ENCODE measurements at regions of chr3 and their contacts with region 1.

Region 1: GRCh38 chr3:128075516-128076482 is 23.6 kb downstream of the SEC61A1 start:
- DNase-seq: peak; percentile 86
- H3K4me3 Mint-ChIP-seq: peak overlapping the region; percentile 46
- H3K27ac Mint-ChIP-seq: no peak overlapping the region
- H3K4me1 Mint-ChIP-seq: peaks cover 20% of the 10 kb centered on the region
- H3K27me3 Mint-ChIP-seq: no peaks in the 10 kb centered on the region

Region 2: DNA sequence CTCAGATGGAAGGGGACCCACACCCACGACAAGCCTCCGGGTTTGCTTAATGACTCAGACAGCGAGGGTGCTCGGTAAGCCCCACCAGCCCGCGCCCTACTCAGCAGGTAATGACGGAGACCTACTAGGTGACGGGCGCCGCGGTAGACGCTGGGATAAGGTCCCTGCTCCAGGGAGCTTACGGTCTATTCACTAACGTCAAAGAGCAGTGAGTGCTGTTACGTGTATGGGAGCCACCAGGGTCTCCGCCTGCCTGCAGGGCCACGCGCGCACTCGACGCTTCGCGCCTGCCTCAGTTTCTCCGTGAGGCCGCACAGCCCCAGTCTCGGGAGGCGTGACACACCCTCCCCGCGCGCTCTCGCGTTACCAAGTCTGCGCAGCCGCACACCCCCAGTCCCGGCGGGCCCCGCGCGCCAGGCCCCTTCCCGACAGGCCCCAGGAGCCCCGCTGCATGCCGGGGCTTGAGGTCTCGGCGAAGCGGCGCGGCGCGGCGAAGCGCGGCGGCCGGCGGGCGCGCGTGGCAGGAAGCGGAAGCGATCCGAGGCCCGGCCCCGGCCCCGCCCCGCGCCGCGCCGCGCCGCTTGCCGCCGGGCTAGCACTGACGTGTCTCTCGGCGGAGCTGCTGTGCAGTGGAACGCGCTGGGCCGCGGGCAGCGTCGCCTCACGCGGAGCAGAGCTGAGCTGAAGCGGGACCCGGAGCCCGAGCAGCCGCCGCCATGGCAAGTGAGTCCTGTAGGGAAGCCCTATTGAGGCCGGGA is 23.8 kb before region 1 on chr3 and contains the start of gene SEC61A1:
- CTCF ChIA-PET with region 1: interaction called, 3 read pairs
- intact Hi-C with region 1: loop called (anchors 1 kb)
- DNase-seq: peak; percentile 95
- H3K4me3 Mint-ChIP-seq: peak within 1 kb of the TSS; percentile 91
- H3K27ac Mint-ChIP-seq: peak within 1 kb of the TSS; percentile 95
- H3K4me1 Mint-ChIP-seq: peaks cover 40% of the 10 kb centered on the region
- H3K27me3 Mint-ChIP-seq: peaks cover under 1% of the 10 kb centered on the region
- total RNA-seq, gene SEC61A1: 115 to 119 TPM

Region 3: DNA sequence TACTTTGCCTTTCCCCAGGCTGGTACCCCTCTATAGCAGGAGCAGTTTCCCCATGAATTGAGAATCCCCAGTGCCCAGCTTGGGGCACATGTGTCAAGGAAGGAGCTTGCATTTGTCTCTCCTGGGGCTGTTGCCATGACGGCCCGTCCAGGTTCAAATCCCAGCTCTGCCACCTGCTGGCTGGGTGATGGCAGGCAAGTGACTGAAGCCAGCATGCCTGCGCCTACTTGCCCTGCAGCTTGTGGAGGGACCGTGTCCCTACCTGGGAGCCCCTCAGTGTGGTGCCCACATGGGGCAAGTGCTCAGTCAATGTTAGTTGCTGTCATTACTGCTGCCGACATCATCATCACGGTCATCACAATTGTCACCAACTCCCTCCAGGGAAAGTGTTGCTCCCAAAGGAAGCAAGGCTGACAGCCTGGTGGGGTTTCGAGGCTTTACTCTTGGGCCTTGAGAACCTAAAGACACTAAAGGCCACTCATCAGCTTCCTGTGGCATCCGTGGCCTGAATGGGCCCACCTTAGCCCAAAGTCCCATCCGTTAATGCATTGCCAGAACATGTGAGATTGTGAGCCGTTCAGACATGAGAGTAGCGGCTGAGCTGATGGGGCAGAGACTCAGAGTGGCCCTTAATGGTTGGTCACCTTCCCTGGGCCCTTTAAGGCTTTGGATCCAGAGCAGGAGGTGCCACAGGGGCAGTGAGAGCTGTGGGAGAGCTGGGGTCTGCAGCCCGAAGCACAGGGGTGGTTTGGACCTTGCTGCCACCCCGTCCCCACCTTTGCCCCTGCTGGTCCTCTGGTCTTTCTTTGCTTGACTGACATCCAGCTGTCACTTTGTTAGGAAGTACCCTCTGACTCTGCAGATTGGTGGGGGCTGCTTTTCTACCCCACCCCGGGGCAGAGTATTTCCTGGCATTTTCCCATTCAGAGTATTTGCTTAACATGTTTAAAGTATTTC is 246.5 kb after region 1 on chr3:
- CTCF ChIA-PET with region 1: no interaction called
- intact Hi-C with region 1: loop called (anchors 1 kb)
- DNase-seq: peak; percentile 84
- H3K4me3 Mint-ChIP-seq: no peak overlapping the region
- H3K27ac Mint-ChIP-seq: no peak overlapping the region
- H3K4me1 Mint-ChIP-seq: peaks cover 51% of the 10 kb centered on the region
- H3K27me3 Mint-ChIP-seq: no peaks in the 10 kb centered on the region

Region 4: GRCh38 chr3:128487813-128488635 is 412.2 kb after region 1 on chr3:
- CTCF ChIA-PET with region 1: no interaction called
- intact Hi-C with region 1: loop called (anchors 2 kb)
- DNase-seq: peak; percentile 44
- H3K4me3 Mint-ChIP-seq: peak overlapping the region; percentile 72
- H3K27ac Mint-ChIP-seq: no peak overlapping the region
- H3K4me1 Mint-ChIP-seq: peaks cover 45% of the 10 kb centered on the region
- H3K27me3 Mint-ChIP-seq: peaks cover 72% of the 10 kb centered on the region

Region 5: GRCh38 chr3:128607710-128608048 is 531.9 kb after region 1 on chr3:
- CTCF ChIA-PET with region 1: no interaction called
- intact Hi-C with region 1: loop called (anchors 2 kb)
- DNase-seq: no peak
- H3K4me3 Mint-ChIP-seq: no peak overlapping the region
- H3K27ac Mint-ChIP-seq: no peak overlapping the region
- H3K4me1 Mint-ChIP-seq: peaks cover 2% of the 10 kb centered on the region
- H3K27me3 Mint-ChIP-seq: peaks cover 2% of the 10 kb centered on the region